ENCODE measurements at regions of chr1 and their contacts with region 1.

Region 1: GRCh38 chr1:182614796-182615454 is 10.7 kb upstream of the RGS16 start:
- DNase-seq: peak; percentile 85
- H3K4me3 ChIP-seq: peak overlapping the region; percentile 45 to 53
- H3K27ac ChIP-seq: peak overlapping the region; percentile 60 to 90
- H3K4me1 ChIP-seq: peaks cover 18 to 21% of the 10 kb centered on the region in 2 experiments
- H3K27me3 ChIP-seq: no peaks in the 10 kb centered on the region
- CTCF ChIP-seq: no peak
- EP300 ChIP-seq: peak in 1 of 2 experiments; percentile 47; a peak in 1 of 4 replicates
- RAD21 ChIP-seq: no peak

Region 2: DNA sequence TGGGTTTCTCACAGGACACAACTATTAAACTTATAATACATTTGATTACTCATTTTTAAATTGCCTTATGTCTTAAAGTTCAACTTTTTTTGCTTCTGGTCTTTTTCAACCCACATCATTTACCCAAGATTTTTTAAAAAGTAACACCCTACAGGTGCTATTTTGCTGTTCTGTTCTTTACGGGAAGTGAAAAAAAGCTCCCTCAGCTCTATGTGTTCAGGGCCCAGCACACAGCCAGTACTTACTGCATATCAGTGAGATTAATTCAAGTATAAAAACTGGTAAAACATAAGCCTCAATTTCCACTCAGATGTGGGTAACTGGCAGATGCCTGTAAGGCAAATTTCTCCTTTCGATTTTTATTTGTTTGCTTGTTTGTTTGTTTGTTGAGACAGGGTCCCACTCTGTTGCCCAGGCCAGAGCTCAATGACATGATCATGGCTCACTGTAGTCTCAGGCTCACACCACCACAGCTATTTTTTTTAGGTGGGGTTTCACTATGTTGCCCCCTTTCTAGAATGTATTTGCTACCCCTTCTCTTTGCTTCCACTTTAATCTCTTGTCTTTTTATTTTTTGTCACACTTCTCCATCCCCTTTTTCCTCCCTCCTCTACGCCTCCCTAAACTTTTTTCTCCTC is 46.2 kb before region 1 on chr1:
- CTCF ChIA-PET with region 1: no interaction called
- POLR2A ChIA-PET with region 1: no interaction called
- DNase-seq: no peak
- H3K4me3 ChIP-seq: no peak overlapping the region
- H3K27ac ChIP-seq: no peak overlapping the region
- H3K4me1 ChIP-seq: no peaks in the 10 kb centered on the region
- H3K27me3 ChIP-seq: no peaks in the 10 kb centered on the region
- CTCF ChIP-seq: no peak
- EP300 ChIP-seq: no peak
- RAD21 ChIP-seq: no peak

Region 3: GRCh38 chr1:182595641-182596240 is 19.2 kb before region 1 on chr1:
- CTCF ChIA-PET with region 1: interaction called, 19 read pairs
- POLR2A ChIA-PET with region 1: no interaction called
- DNase-seq: peak; percentile 69
- H3K4me3 ChIP-seq: no peak overlapping the region; a peak in 1 of 4 replicates
- H3K27ac ChIP-seq: no peak overlapping the region
- H3K4me1 ChIP-seq: peaks cover 0 to 10% of the 10 kb centered on the region in 2 experiments; a peak in 3 of 4 replicates
- H3K27me3 ChIP-seq: no peaks in the 10 kb centered on the region
- CTCF ChIP-seq: peak; percentile 89
- EP300 ChIP-seq: no peak
- RAD21 ChIP-seq: peak; percentile 80

Measured in SK-N-SH (cell line).